Tibial artery (tissue), 4 donors: ENCODE measurements at regions of chr2 and their contacts with region 1.

Region 1: GRCh38 chr2:234951664-234952269 is at the start of gene SH3BP4:
- DNase-seq: peak; percentile 75 to 91
- H3K4me3 ChIP-seq: peak within 1 kb of the TSS; percentile 86 to 92
- H3K27ac ChIP-seq: peak within 1 kb of the TSS; percentile 87 to 90
- H3K4me1 ChIP-seq: peaks cover 0 to 34% (median 23%) of the 10 kb centered on the region in 4 donors
- H3K27me3 ChIP-seq: no peaks in the 10 kb centered on the region
- CTCF ChIP-seq: no peak

Region 2: DNA sequence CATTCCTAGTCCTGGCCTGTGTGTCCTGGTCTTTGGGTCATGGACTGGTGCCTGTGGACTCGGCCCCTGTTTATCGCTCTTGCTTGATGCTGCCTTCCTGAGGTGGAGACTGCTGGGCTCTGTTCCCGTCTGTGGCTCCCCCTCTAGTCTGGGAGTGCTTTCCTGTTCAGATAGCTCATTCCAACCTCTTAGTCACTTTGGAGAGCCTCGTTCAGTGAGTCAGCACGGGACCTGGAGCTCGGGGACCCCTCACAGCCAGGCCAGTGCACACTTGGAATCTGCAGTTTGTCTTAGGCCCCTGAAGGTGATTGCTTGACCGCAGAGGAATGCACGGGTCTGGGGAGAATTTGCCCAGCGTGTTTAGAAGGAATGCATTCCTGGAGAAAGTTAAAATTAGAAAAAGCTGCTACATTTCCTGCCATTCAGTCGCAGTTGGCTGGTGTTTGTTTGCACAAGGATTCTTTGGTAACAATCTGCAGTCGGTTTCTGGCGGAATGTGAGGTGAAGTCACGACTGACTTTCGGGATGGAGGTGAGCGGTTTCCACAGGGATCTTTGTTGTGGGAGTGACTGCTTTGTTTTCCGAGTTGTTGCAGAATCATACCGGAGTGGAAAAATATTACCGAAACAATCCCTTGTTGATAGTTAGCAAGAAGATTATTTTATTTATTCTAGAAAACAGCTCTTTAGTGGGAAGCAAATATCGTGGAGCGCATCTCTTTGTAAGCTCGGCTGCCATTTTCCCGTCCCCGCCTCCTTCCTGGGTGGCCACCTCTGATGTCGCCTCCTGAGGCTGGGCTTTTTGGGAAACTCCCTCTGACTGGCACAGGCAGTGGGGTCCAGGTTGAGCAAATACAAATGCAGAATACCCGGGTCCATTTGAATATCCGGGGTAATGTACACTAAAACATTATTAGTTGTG is 29.7 kb after region 1 on chr2:
- intact Hi-C with region 1: loop called (anchors 2 kb)
- DNase-seq: peak; percentile 74 to 86
- H3K4me3 ChIP-seq: peak overlapping the region; percentile 17 to 29
- H3K27ac ChIP-seq: peak overlapping the region; percentile 53 to 69
- H3K4me1 ChIP-seq: peaks cover 6 to 71% (median 48%) of the 10 kb centered on the region in 4 donors
- H3K27me3 ChIP-seq: no peaks in the 10 kb centered on the region
- CTCF ChIP-seq: no peak

Region 3: DNA sequence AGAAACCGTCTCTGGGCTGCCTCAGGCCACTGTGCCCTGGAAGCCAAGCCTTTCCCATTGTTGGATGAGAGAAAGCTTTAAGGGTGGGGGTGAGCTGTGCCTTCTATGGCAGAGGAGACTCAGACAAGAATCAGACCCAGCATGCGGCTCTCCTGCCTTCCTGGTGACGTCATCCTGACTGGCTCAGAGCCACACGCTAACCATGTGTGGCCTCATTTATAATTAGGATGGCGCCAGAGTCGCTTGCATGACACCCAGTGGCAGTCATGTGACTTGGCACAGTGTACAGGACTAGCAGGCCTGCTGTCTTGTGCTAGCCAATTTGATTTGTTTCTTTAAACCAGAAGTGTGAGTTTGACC is 99.2 kb after region 1 on chr2:
- intact Hi-C with region 1: loop called (anchors 5 kb)
- DNase-seq: peak; percentile 91 to 96
- H3K4me3 ChIP-seq: no peak overlapping the region
- H3K27ac ChIP-seq: peak overlapping the region; percentile 64 to 69
- H3K4me1 ChIP-seq: peaks cover 0 to 31% (median 21%) of the 10 kb centered on the region in 4 donors
- H3K27me3 ChIP-seq: no peaks in the 10 kb centered on the region
- CTCF ChIP-seq: no peak

Region 4: DNA sequence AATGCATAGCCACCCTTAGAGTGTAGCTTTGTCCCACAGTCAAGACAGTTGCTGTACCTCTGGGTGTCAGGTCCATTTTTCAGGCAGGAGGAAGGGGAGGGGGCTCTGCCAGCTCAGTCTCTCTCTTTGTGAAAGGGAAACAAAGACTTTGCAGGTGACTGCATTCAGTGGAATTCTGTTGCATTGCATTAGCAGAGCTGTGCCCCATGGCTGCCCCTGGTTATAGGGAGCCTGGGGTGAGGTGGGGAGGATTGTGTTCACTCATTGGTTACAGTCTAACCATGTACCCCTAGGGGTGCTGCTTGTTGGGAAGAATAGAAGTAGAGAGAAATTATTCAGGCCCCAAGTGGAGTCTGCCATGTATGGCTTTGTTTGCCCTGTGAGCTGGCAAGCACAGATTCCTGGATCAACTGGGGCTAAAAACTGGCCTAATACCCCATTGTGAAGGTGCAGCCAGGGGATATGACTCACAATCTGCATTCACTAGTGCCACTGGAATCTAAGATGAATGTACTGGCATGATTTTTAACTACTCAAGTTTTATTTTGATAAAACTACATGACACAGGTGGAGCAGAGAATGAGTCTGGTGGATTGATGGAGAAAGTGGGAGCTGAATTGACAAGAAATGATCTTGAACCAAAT is 118.4 kb after region 1 on chr2:
- intact Hi-C with region 1: no loop called
- DNase-seq: no peak
- H3K4me3 ChIP-seq: no peak overlapping the region
- H3K27ac ChIP-seq: no peak overlapping the region
- H3K4me1 ChIP-seq: no peaks in the 10 kb centered on the region
- H3K27me3 ChIP-seq: peaks cover 0 to 5% of the 10 kb centered on the region in 2 donors
- CTCF ChIP-seq: no peak